PC-9 (cell line): ENCODE measurements at regions of chr10 and their contacts with region 1.

Region 1: GRCh38 chr10:43461950-43462349 is 25.0 kb downstream of the ZNF487 start:
- DNase-seq: peak; percentile 25 to 65
- H3K4me3 ChIP-seq: no peak overlapping the region
- H3K27ac ChIP-seq: no peak overlapping the region
- H3K4me1 ChIP-seq: no peaks in the 10 kb centered on the region
- H3K27me3 ChIP-seq: no peaks in the 10 kb centered on the region
- CTCF ChIP-seq: peak; percentile 89

Region 2: DNA sequence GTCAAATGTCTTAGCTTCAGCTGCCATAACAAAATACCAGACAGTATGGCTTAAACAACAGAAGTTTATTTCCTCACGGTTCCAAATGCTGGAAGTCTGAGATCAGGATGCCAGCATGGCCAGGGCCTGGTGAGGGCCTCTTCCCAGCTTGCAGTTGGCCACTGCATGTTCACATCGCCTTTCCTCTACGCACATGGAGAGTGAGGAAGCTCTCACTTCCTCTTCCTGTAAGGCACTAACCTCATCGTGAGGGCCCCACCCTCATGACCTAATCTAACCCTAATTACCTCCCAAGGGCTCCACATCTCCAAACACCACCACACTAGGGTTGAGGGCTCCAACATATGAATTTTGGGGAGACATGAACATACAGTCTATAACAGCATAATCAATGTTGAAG is 838.0 kb before region 1 on chr10:
- CTCF ChIA-PET with region 1: no interaction called
- POLR2A ChIA-PET with region 1: no interaction called
- intact Hi-C with region 1: loop called (anchors 10 kb)
- DNase-seq: no peak
- H3K4me3 ChIP-seq: no peak overlapping the region
- H3K27ac ChIP-seq: no peak overlapping the region
- H3K4me1 ChIP-seq: no peaks in the 10 kb centered on the region
- H3K27me3 ChIP-seq: no peaks in the 10 kb centered on the region
- CTCF ChIP-seq: no peak

Region 3: DNA sequence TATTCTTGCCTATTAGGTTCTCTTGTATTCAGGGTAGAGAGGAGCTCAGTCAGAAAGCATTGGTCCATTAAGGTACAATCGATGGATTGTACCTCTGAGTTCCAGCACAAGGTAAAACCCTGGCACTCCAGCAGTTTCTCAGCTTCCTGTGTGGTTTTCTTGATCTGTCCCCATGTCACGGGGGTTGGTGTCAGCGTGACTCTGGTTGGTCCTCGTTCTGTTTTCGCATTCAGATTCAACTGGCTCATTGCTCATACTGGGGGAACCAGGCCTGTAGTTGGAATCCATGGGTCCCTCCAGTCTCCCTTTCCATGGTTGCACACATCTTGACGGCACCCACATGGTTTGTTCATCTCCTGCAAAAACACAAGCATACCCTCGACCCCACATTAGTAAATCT is 162.4 kb before region 1 on chr10:
- CTCF ChIA-PET with region 1: interaction called, 13 read pairs
- POLR2A ChIA-PET with region 1: no interaction called
- intact Hi-C with region 1: no loop called
- DNase-seq: no peak
- H3K4me3 ChIP-seq: no peak overlapping the region
- H3K27ac ChIP-seq: no peak overlapping the region
- H3K4me1 ChIP-seq: no peaks in the 10 kb centered on the region
- H3K27me3 ChIP-seq: peaks cover 52% of the 10 kb centered on the region
- CTCF ChIP-seq: no peak